ENCODE measurements at regions of chr12 and their contacts with region 1.

Region 1: DNA sequence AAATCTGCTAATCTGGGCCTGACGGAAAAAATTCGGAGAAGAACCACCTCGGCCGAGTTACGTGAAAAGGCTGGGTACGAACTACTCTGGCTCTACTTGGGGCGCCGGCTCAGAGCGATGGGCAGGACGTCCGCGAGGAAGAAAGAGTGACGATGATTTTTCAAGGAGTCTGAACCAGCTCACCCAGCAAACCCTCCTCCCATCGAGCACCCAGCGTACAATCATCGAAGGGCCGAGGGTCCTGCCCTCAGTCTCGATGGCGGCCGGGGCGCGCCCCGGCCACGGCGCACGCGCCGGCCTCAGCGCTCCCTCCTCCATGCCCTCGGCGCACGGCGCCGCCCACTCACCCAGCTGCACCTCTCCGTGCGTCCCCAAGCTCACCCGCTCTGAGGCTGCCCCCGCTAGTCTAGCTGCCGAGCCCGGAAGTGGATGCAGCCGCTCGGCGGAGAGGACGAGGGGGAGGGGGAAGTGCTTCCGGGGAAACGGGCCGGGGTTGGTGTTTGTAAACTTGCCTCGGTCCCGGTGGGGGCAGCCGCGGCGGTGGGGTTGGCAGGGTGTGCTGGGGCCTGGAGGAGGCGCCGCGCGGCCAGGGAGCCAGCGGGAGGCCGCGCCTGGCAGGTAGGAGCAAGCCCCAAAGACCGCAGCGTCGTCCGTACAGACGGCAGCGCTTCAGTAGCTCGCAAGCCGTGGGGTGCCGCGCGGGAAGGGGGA is at the starts of genes CSAD and ZNF740:
- DNase-seq: peak; percentile 94 to 99 (median 97)
- ATAC-seq: peak; percentile 92 to 96
- H3K4me3 Mint-ChIP-seq: peak within 1 kb of the TSS; percentile 90 to 97 (median 92)
- H3K27ac Mint-ChIP-seq: peak within 1 kb of the TSS; percentile 94 to 99 (median 98)
- H3K4me1 Mint-ChIP-seq: peaks cover 29 to 62% (median 54%) of the 10 kb centered on the region in 4 donors
- H3K27me3 Mint-ChIP-seq: no peaks in the 10 kb centered on the region
- polyA plus RNA-seq, gene CSAD: 1.1 to 1.3 (median 1.2) TPM
- polyA plus RNA-seq, gene ZNF740: 2.8 to 3.5 (median 3.1) TPM

Region 2: DNA sequence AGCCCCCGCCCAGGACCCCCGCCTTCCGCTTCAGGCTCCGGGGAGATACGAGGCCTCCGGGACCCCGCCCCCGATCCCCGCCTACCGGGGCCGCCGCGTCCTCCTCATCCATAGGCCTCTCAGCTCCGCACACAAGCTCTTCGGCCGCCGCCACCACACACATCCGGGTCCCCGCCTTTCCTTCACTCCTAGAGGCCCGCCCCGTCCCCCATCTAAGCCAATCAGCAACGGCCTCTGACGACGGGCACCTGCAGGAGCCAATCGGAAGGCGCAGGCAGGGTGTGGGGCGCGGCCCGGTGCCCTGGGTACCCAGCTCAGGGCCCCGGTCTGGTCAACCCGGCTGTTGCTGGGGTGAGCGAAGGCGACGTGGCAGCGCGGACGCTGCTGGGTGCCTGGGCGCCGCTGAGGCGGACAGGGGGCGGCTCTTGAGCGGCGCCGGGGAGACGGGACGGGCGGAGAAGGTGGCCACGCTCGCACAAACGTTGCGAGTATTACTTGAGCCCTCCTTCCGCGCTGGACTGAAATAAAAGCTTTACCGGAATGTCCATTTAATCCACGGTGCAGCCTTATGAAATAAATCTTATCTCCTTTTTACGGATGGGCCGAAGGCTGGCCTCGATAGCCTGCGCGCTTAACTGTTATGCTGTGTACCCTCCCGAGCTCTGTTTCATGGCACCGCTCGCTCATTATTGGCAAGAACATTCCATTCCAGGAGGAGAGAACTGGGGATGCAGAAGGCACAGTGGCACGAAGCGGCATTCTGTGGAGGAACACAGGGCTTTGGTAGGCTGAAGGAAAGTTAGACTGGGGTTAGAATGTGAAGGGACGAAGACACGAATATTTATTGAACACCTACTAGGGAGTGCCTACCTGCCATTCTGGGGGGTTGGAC is 100.9 kb before region 1 on chr12 and contains the start of gene SPRYD3:
- POLR2A ChIA-PET with region 1: interaction called, 12 read pairs
- DNase-seq: peak; percentile 91 to 99 (median 97)
- ATAC-seq: peak; percentile 95 to 96
- H3K4me3 Mint-ChIP-seq: peak within 1 kb of the TSS; percentile 85 to 99 (median 94)
- H3K27ac Mint-ChIP-seq: peak within 1 kb of the TSS; percentile 91 to 98 (median 97)
- H3K4me1 Mint-ChIP-seq: peaks cover 20 to 59% (median 47%) of the 10 kb centered on the region in 4 donors
- H3K27me3 Mint-ChIP-seq: no peaks in the 10 kb centered on the region
- polyA plus RNA-seq, gene SPRYD3: 49.4 to 53.2 (median 51.7) TPM

Region 3: DNA sequence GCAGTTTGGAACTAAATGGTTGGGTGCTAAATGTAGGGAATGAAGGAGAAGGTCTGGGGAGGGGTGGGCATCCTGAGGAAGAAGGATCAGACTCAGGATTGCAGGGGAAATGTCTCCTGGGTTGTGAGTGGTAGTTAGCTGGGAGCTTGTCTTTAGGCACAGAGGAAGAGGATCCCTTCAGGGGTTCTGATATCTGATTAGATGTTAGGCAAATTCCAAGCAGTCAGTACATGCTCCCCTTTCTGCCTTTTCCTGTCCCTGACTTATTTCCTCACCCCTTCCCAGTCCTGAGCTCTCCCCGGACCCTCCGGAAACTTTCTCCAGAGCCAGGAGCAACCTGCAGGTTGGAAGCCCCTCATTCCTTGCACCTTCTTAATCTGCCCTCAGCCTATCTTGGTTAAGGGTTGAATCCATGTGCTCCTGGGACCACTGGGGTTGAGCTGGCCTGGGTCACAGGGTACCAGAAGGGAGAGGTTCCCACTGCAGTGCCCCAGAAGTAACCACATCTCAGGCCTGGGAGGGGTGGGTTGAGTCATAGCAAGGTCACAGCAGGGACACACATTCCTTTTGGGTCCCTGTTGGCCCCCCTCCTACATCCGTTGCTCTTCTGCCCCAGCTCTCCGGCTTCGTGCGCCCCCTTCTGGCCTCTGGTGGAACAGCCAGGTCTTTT is 81.3 kb before region 1 on chr12:
- POLR2A ChIA-PET with region 1: interaction called, 17 read pairs
- DNase-seq: peak; percentile 77 to 93 (median 86)
- ATAC-seq: peak; percentile 33 to 39
- H3K4me3 Mint-ChIP-seq: peak overlapping the region; percentile 79 to 91 (median 86)
- H3K27ac Mint-ChIP-seq: peak overlapping the region; percentile 56 to 93 (median 82)
- H3K4me1 Mint-ChIP-seq: peaks cover 39 to 62% (median 58%) of the 10 kb centered on the region in 4 donors
- H3K27me3 Mint-ChIP-seq: peaks cover 0 to 1% (median 0%) of the 10 kb centered on the region in 5 donors

Region 4: DNA sequence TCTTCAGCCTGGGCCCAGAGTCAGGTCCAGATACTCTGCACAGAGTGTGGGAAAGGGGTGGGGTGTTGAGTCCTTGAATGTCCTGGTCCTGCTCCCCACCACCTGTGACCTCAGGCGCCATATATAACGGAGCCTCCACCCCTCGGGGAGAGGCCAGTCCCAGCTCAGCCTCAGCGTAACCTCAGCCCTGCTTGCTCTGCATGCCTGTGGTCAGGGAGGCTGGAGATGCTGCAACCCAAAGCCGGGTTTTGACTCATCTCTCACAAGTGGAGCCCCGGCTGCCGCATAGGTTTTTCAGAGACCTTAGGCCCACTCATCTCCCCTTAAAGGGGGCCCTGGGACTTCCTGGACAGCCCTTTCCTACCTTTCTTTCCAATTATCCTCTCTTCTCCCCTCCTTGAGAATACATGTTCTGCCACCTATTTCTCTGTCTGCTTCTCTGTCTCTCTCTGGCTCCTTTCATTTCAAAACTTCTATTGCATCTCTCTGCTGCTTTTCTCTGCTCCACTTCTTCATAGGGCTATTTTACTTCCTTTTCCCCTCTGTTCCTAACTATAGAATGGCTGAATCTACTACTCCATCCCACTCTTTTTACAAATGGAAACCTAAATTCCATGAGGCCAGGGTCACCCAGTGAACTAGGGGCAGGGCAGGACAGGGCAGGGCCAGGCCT is 25.5 kb after region 1 on chr12:
- POLR2A ChIA-PET with region 1: interaction called, 338 read pairs
- DNase-seq: peak in 2 of 10 donors; percentile 44 to 55
- ATAC-seq: peak; percentile 26 to 58
- H3K4me3 Mint-ChIP-seq: peak overlapping the region; percentile 77 to 95 (median 90)
- H3K27ac Mint-ChIP-seq: peak overlapping the region; percentile 83 to 98 (median 92)
- H3K4me1 Mint-ChIP-seq: peaks cover 39 to 92% (median 74%) of the 10 kb centered on the region in 4 donors
- H3K27me3 Mint-ChIP-seq: no peaks in the 10 kb centered on the region

Region 5: GRCh38 chr12:53267999-53268647 is 87.7 kb after region 1 on chr12 and contains the start of gene ESPL1:
- POLR2A ChIA-PET with region 1: interaction called, 13 read pairs
- DNase-seq: peak; percentile 77 to 91 (median 85)
- ATAC-seq: peak; percentile 90 to 95
- H3K4me3 Mint-ChIP-seq: peak within 1 kb of the TSS; percentile 92 to 100 (median 96)
- H3K27ac Mint-ChIP-seq: peak within 1 kb of the TSS; percentile 88 to 96 (median 94)
- H3K4me1 Mint-ChIP-seq: peaks cover 12 to 22% (median 20%) of the 10 kb centered on the region in 4 donors
- H3K27me3 Mint-ChIP-seq: peaks cover 0 to 4% (median 0%) of the 10 kb centered on the region in 5 donors
- polyA plus RNA-seq, gene ESPL1: not detected

Region 6: DNA sequence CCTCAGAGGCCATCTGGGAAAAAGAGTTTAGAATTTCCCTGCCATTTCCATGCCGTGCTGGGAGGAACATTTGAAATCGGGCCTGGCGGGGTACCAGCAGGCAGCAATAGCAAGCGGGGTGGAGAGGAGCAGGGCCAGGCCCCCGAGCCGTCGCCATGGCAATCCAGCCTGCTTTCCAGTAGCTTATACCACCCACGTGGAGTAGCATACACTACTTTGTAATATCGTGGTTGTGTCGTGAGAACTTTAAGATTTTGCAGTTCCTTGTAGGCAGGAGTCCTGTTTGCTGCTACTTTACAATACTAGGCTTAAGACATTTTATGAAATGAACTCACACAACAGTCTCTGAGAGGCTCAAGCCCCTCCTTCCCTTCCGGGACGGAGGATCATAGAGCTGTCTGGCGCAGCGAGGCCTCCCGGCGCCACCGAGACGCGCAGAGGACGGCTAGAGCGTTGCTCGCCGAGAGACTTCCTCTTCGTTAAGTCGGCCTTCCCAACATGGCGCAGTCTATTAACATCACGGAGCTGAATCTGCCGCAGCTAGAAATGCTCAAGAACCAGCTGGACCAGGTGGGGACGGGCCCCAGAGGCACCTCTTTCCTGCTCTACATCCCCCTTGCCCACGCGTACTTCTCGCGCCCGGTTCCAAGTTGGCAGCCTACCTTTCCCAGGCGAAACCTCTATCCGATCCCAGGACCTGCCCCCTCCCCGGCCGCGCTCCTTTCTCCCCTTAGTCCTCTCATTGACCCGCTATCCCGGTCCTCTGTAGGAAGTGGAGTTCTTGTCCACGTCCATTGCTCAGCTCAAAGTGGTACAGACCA is 114.9 kb after region 1 on chr12 and contains the start of gene PFDN5:
- POLR2A ChIA-PET with region 1: interaction called, 22 read pairs
- DNase-seq: peak; percentile 72 to 94 (median 87)
- ATAC-seq: peak; percentile 90 to 93
- H3K4me3 Mint-ChIP-seq: peak within 1 kb of the TSS; percentile 95 to 100 (median 99)
- H3K27ac Mint-ChIP-seq: peak within 1 kb of the TSS; percentile 97 to 100 (median 99)
- H3K4me1 Mint-ChIP-seq: peaks cover 10 to 61% (median 46%) of the 10 kb centered on the region in 4 donors
- H3K27me3 Mint-ChIP-seq: no peaks in the 10 kb centered on the region
- polyA plus RNA-seq, gene PFDN5: 1,657 to 1,928 (median 1,896) TPM

Region 7: DNA sequence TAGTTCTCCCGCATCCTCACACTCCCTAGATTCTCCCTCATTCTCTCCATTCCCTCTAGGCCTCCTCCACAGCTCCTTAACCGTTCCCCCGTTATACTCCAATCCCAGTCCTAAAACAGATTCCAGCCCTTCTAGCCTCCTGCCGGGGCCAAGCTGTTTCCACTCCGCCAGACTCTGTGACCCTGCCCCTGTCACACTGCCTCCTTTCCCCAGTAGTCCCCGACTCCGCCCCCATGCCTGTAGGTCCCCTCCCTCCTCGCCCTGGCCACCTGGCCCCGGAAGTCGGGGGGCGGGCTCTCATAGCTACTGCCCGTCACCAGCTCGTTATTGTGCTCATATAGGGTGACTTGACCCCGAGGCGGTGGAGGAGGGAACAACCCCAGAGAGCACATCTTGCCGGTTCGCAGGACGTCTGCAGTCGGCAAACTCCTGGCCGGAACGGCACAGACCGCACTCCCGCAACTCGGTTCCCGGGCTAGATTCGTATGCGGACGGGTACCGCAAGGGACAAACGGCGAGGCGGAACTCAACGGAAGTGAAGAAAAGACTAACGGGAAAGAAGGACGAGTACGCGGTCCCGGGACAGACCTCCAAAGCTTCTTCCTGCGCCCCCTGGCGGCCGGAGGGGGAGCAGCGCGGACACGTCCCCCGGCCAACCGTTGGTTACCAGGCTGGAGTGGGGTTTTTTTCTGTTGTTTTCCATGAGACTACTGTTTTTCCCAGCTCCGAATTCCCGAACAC is 140.9 kb after region 1 on chr12 and contains the start of gene AAAS:
- POLR2A ChIA-PET with region 1: interaction called, 15 read pairs
- DNase-seq: peak; percentile 87 to 99 (median 92)
- ATAC-seq: peak; percentile 77 to 78
- H3K4me3 Mint-ChIP-seq: peak within 1 kb of the TSS; percentile 90 to 100 (median 98)
- H3K27ac Mint-ChIP-seq: peak within 1 kb of the TSS; percentile 96 to 99 (median 97)
- H3K4me1 Mint-ChIP-seq: peaks cover 28 to 51% (median 45%) of the 10 kb centered on the region in 4 donors
- H3K27me3 Mint-ChIP-seq: no peaks in the 10 kb centered on the region
- polyA plus RNA-seq, gene AAAS: 34.1 to 57.2 (median 39.3) TPM

Measured in naive thymus-derived CD8-positive, alpha-beta T cell (primary cell).